Mammary epithelial cell (primary cell): ENCODE measurements at regions of chr11 and their contacts with region 1.

Region 1: GRCh38 chr11:107840129-107840484 is 18.5 kb downstream of the SLC35F2 start:
- DNase-seq: no peak
- H3K4me3 ChIP-seq: peak overlapping the region in 2 of 3 experiments; percentile 0 to 7
- H3K27ac ChIP-seq: peak overlapping the region; percentile 82
- H3K4me1 ChIP-seq: peaks cover 43% of the 10 kb centered on the region
- H3K27me3 ChIP-seq: no peaks in the 10 kb centered on the region
- CTCF ChIP-seq: no peak

Region 2: DNA sequence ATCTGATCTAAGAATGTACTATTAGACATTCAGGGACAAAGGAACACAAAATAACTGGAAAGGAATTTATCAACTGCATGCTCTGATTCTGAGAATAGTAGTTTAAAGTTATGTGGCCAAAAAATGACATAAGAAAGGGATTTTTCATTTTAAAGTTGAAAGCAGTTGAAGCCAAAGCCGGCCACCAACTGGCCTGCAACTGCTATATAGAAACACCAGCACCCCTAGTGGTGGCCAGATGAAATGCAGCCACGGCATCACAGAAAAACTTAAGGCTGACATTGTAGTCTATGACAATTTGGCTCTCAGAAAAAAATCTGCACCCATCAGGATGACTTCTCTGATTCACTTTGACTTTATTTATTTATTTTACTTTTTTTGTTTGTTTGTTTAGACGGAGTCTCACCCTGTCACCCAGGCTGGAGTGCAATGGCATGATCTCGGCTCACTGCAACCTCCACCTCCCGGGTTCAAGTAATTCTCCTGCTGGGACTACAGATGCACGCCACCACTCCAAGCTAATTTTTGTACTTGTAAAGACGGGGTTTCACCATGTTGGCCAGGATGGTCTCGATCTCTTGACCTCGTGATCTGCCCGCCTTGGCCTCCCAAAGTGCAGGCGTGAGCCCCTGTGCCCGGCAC is 40.8 kb before region 1 on chr11:
- CTCF ChIA-PET with region 1: no interaction called
- dilution Hi-C with region 1: no loop called
- in situ Hi-C with region 1: no loop called
- intact Hi-C with region 1: loop called (anchors 5 kb)
- DNase-seq: peak; percentile 38
- H3K4me3 ChIP-seq: no peak overlapping the region
- H3K27ac ChIP-seq: no peak overlapping the region
- H3K4me1 ChIP-seq: no peaks in the 10 kb centered on the region
- H3K27me3 ChIP-seq: no peaks in the 10 kb centered on the region
- CTCF ChIP-seq: peak; percentile 96 to 99

Region 3: DNA sequence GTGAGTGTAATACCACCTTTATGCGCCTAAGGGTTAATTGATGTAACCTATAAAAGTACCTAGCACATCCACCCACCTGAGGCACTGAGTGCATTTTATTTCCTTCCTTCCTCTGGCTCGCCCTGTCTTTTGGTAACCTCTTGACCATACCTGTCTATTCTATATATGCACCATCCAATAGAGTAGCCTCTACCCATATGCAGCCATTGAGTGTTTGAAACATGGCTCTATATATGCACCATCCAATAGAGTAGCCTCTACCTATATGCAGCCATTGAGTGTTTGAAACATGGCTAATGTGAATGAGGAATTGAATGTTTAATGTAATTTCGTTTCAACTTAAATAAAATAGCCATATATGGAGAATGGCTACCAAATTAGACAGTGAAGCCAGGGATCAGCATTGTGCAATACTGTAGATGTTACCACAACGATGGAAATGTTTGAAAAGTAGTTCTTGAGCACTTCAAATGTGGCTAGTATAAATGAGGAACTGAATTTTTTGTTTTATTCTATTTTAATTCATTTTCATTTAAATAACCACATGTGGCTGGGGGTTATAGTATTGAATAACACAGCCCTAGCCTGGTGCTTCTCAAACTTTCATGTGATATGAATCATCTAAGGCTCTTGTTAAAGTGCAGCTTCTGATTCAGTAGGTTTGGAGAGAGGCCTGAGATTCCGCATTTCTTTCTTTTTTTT is 15.3 kb before region 1 on chr11:
- CTCF ChIA-PET with region 1: no interaction called
- dilution Hi-C with region 1: no loop called
- in situ Hi-C with region 1: no loop called
- intact Hi-C with region 1: loop called (anchors 2 kb)
- DNase-seq: no peak
- H3K4me3 ChIP-seq: no peak overlapping the region
- H3K27ac ChIP-seq: no peak overlapping the region
- H3K4me1 ChIP-seq: peaks cover 10% of the 10 kb centered on the region
- H3K27me3 ChIP-seq: no peaks in the 10 kb centered on the region
- CTCF ChIP-seq: no peak

Region 4: DNA sequence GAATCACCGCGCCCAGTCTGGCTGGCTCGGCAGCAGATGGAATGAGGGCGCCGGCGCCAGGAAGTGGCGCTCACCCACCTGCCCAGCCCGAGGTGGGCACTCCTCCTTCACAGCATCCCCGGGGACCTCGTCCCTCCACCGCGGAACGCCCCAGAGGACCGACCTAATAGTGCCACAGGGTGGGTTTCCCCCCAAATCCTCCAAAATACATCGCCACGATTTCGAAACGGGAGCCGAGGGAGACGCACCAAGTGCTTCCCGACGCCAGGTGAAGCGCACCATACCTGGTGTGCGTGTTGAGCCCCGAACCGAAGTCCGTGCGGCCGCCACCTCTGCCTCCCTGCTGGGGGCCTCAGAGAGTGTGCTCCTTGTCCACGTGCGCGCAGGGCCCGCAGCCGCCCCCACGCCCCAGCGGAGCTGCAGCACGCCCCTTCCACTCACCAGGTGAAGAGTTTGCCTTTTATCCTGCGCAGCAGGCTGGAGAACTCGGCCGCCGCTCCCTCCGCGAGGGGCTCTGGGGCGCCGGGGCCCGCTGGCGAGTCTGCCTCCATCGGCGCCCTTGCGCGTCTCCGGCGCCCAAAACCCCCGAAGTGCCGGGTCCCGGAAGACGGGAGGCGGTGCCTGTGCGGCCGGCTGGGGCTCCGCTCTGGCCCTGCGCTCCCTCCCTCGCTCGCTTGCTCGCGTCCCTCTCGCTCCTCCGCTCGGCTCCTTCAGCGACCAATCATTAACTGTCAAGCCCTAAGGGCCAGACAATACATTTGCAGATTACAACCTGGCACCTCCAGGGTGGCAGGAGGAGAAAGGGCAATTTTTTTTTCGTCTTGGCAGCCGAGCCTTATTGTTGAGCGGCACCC is 18.3 kb after region 1 on chr11 and contains the start of gene SLC35F2:
- CTCF ChIA-PET with region 1: no interaction called
- dilution Hi-C with region 1: no loop called
- in situ Hi-C with region 1: no loop called
- intact Hi-C with region 1: loop called (anchors 1 kb)
- DNase-seq: peak; percentile 89
- H3K4me3 ChIP-seq: peak within 1 kb of the TSS; percentile 81 to 94 (median 91)
- H3K27ac ChIP-seq: peak within 1 kb of the TSS; percentile 35
- H3K4me1 ChIP-seq: peaks cover 12% of the 10 kb centered on the region
- H3K27me3 ChIP-seq: no peaks in the 10 kb centered on the region
- CTCF ChIP-seq: peak in 1 of 2 donors; percentile 22
- total RNA-seq, gene SLC35F2: 23.5 to 35.3 TPM